Activated CD8-positive, alpha-beta T cell treated with anti-CD3 and anti-CD28 coated beads for 36 hours (primary cell): ENCODE measurements at regions of chr18 and their contacts with region 1.

Region 1: GRCh38 chr18:9608298-9608697 is 6.1 kb downstream of the PPP4R1 start:
- DNase-seq: no peak
- ATAC-seq: no peak
- H3K4me3 Mint-ChIP-seq: no peak overlapping the region
- H3K27ac Mint-ChIP-seq: no peak overlapping the region
- H3K4me1 Mint-ChIP-seq: peaks cover 44% of the 10 kb centered on the region
- H3K27me3 Mint-ChIP-seq: no peaks in the 10 kb centered on the region
- CTCF ChIP-seq: no peak

Region 2: DNA sequence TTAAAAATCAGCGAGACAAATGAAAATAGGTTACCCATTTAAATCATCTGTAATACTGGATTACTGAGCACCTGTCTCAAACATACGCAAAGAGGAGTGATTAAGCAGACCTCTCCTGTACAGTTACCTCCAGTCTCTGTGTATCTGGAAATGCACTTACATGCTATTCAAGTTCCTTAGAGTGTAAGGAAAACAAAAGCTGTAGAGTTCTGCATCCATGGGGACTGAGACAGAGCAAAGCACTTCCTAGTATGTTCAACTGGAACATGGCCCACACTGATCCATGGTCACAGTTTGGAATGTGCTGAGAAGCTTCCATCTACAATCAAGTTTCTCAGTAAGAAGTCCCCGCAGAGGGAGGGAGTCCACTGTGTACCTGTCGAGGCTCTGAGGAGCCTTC is 57.9 kb before region 1 on chr18:
- CTCF ChIA-PET with region 1: no interaction called
- POLR2A ChIA-PET with region 1: no interaction called
- intact Hi-C with region 1: loop called (anchors 2 kb)
- DNase-seq: no peak
- ATAC-seq: no peak
- H3K4me3 Mint-ChIP-seq: no peak overlapping the region
- H3K27ac Mint-ChIP-seq: no peak overlapping the region
- H3K4me1 Mint-ChIP-seq: no peaks in the 10 kb centered on the region
- H3K27me3 Mint-ChIP-seq: no peaks in the 10 kb centered on the region
- CTCF ChIP-seq: no peak

Region 3: GRCh38 chr18:9683407-9684396 is 75.4 kb after region 1 on chr18:
- CTCF ChIA-PET with region 1: no interaction called
- POLR2A ChIA-PET with region 1: no interaction called
- intact Hi-C with region 1: no loop called
- DNase-seq: no peak
- ATAC-seq: no peak
- H3K4me3 Mint-ChIP-seq: no peak overlapping the region
- H3K27ac Mint-ChIP-seq: no peak overlapping the region
- H3K4me1 Mint-ChIP-seq: peaks cover 6% of the 10 kb centered on the region
- H3K27me3 Mint-ChIP-seq: peaks cover 7% of the 10 kb centered on the region
- CTCF ChIP-seq: no peak

Region 4: GRCh38 chr18:9719421-9719981 is 111.2 kb after region 1 on chr18:
- CTCF ChIA-PET with region 1: no interaction called
- POLR2A ChIA-PET with region 1: no interaction called
- intact Hi-C with region 1: no loop called
- DNase-seq: no peak
- ATAC-seq: no peak
- H3K4me3 Mint-ChIP-seq: no peak overlapping the region
- H3K27ac Mint-ChIP-seq: no peak overlapping the region
- H3K4me1 Mint-ChIP-seq: no peaks in the 10 kb centered on the region
- H3K27me3 Mint-ChIP-seq: peaks cover 22% of the 10 kb centered on the region
- CTCF ChIP-seq: no peak